Endothelial cell of umbilical vein (primary cell): ENCODE measurements at regions of chr6 and their contacts with region 1.

Region 1: GRCh38 chr6:24855395-24856245 is 56.9 kb upstream of the ARMH2 start:
- DNase-seq: peak; percentile 70
- H3K4me3 ChIP-seq: no peak overlapping the region
- H3K27ac ChIP-seq: no peak overlapping the region
- H3K4me1 ChIP-seq: no peaks in the 10 kb centered on the region
- H3K27me3 ChIP-seq: no peaks in the 10 kb centered on the region
- CTCF ChIP-seq: peak; percentile 74 to 76
- POLR2A ChIP-seq: no peak

Region 2: DNA sequence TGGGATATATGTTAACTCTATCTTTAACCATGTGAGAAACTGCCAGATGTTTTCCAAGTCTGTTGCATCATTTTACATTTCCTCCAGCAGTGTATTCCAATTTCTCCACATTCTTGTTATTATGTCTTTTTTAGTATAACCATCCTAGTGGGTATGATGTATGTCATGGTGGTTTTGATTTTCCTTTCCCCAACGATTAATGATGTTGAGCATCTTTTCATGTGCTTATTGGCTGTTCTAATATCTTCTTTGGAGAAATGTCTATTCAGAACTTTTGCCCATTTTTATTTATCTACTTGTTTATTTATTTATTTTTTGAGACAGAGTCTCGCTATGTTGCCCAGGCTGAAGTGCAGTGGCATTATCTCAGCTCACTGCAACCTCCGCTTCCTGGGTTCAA is 132.4 kb before region 1 on chr6:
- CTCF ChIA-PET with region 1: no interaction called
- POLR2A ChIA-PET with region 1: no interaction called
- dilution Hi-C with region 1: no loop called
- intact Hi-C with region 1: no loop called
- DNase-seq: no peak
- H3K4me3 ChIP-seq: no peak overlapping the region
- H3K27ac ChIP-seq: no peak overlapping the region
- H3K4me1 ChIP-seq: peaks cover 11% of the 10 kb centered on the region
- H3K27me3 ChIP-seq: no peaks in the 10 kb centered on the region
- CTCF ChIP-seq: no peak
- POLR2A ChIP-seq: no peak

Region 3: DNA sequence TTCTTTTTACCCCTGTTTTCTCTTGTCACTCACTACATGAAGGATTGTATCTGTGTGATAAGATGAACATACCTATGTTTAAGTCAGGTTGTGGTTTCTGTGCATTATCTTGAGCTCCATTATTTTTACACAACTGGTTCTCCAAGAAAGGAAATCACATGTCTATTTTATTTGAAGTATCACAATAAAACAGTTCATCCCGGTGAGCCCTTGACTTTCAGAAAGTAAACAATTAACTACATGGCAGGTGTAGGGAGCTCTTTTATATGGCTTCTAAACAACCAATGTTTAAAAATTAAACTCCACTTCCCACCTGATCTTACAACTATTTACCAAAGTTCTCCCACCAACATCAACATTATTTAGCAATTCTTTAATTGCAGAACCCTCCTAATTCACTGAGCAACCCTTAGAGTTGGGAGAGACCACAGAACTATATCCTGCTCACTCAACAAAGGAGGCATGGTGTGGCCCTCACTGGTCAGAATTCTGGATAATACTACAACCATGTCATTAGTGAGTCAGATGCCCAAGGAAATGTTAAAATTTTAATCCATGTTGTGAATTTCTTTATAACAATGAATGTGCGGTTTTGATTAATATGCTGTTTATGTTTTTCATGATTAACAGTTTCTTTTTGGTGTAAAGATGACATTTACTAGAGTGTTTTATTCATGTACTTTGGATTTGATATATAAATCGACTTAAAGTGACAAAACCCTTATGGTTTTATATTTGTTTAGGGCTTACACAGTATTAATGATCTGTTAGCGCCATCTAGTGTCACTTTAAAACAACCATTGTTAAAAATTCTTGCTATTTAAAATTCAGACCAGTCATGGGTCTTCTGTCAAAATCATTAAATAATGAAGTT is 746.4 kb after region 1 on chr6:
- CTCF ChIA-PET with region 1: interaction called, 3 read pairs
- POLR2A ChIA-PET with region 1: no interaction called
- dilution Hi-C with region 1: no loop called
- intact Hi-C with region 1: loop called (anchors 5 kb)
- DNase-seq: peak; percentile 62
- H3K4me3 ChIP-seq: no peak overlapping the region
- H3K27ac ChIP-seq: no peak overlapping the region
- H3K4me1 ChIP-seq: no peaks in the 10 kb centered on the region
- H3K27me3 ChIP-seq: peaks cover 0 to 2% of the 10 kb centered on the region in 2 experiments
- CTCF ChIP-seq: peak; percentile 10 to 19
- POLR2A ChIP-seq: no peak